ENCODE measurements at regions of chr2 and their contacts with region 1.

Region 1: DNA sequence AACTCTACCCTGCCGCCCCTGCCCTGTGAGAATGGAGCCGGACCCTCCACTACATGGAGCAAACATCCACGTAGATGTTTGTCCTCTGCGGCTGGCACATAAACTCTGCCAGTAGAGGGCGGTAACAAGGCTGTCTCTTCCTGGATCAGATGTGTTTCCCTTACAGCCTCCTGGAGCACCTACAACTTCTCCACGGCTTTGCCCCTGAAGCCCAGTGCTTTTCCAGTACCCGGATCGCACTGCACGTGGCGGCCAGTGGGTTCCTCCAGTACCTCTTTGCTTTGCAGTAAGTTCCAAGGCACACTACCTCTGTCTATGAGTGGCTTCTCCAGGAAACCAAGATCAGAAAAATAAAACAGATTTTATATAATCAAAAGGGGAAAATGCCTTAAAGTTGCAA is 651.3 kb downstream of the DCDC2C start:
- DNase-seq: peak; percentile 57 to 80
- H3K4me3 ChIP-seq: no peak overlapping the region
- H3K27ac ChIP-seq: no peak overlapping the region
- H3K4me1 ChIP-seq: no peaks in the 10 kb centered on the region
- H3K27me3 ChIP-seq: no peaks in the 10 kb centered on the region
- CTCF ChIP-seq: peak; percentile 68 to 95 (median 79)
- EP300 ChIP-seq: no peak
- POLR2A ChIP-seq: no peak
- RAD21 ChIP-seq: peak; percentile 78 to 89

Region 2: DNA sequence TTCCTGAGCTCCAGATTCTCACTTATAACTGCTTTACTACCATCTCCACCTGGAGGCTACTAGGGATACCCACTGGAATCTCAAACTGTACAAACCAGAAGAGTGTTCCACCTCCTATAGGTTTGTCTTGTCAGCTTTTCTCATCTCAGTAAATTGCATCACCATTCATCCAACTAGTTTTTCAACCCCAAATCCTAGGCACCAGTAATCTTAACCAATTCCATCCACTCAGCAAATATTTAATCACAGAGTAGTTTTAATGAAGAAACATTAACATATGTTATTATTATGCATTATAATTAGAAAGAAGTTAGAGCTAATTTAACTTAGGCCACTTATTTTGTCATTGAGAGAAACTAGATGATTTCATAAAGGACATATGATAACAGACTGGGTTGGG is 16.3 kb before region 1 on chr2:
- CTCF ChIA-PET with region 1: interaction called, 10 read pairs
- POLR2A ChIA-PET with region 1: no interaction called
- DNase-seq: no peak
- H3K4me3 ChIP-seq: no peak overlapping the region
- H3K27ac ChIP-seq: no peak overlapping the region
- H3K4me1 ChIP-seq: no peaks in the 10 kb centered on the region; a peak in 1 of 7 replicates
- H3K27me3 ChIP-seq: peaks cover 0 to 2% (median under 1%) of the 10 kb centered on the region in 4 experiments; a peak in 2 of 7 replicates
- CTCF ChIP-seq: no peak
- EP300 ChIP-seq: no peak
- POLR2A ChIP-seq: no peak
- RAD21 ChIP-seq: no peak

Region 3: DNA sequence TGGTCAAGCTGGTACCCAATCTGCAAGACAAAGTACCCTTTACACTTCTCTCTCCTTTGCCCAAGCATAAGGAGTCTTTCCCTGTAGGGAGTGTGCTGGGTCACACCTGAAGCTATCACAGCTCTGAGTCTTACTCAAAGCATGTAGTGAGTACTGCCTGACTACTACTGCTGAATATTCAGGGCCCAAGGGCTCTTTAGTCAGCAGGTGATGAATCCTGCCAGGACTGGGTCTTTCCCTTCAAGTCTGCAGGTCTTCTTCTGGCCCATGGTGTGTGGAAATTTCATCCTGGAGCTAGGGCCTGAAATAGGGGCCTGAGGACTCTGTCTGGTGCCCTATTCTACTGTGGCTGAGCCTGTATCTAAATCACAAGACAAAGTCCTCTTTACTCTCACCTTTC is 214.4 kb after region 1 on chr2:
- CTCF ChIA-PET with region 1: no interaction called
- POLR2A ChIA-PET with region 1: no interaction called
- DNase-seq: no peak
- H3K4me3 ChIP-seq: no peak overlapping the region
- H3K27ac ChIP-seq: no peak overlapping the region
- H3K4me1 ChIP-seq: no peaks in the 10 kb centered on the region; a peak in 1 of 7 replicates
- H3K27me3 ChIP-seq: no peaks in the 10 kb centered on the region
- CTCF ChIP-seq: no peak
- EP300 ChIP-seq: no peak
- POLR2A ChIP-seq: no peak
- RAD21 ChIP-seq: no peak